Activated naive CD8-positive, alpha-beta T cell treated with anti-CD3 and anti-CD28 coated beads, Interleukin-2, amount 10 ng/mL, durations not matched to agents 7 days and 5 days (primary cell): ENCODE measurements at regions of chr11 and their contacts with region 1.

Region 1: GRCh38 chr11:117143871-117144476 is at the start of gene PAFAH1B2:
- DNase-seq: peak; percentile 95
- ATAC-seq: peak; percentile 89
- H3K4me3 Mint-ChIP-seq: peak within 1 kb of the TSS; percentile 98
- H3K27ac Mint-ChIP-seq: peak within 1 kb of the TSS; percentile 95
- H3K4me1 Mint-ChIP-seq: peaks cover 35% of the 10 kb centered on the region
- H3K27me3 Mint-ChIP-seq: peaks cover 18% of the 10 kb centered on the region
- total RNA-seq, gene PAFAH1B2: 58.5 to 60.4 TPM

Region 2: GRCh38 chr11:116772443-116773202 is 371.4 kb before region 1 on chr11 and contains the start of gene BUD13:
- POLR2A ChIA-PET with region 1: interaction called, 11 read pairs
- DNase-seq: peak; percentile 98
- ATAC-seq: peak; percentile 92
- H3K4me3 Mint-ChIP-seq: peak within 1 kb of the TSS; percentile 96
- H3K27ac Mint-ChIP-seq: peak within 1 kb of the TSS; percentile 95
- H3K4me1 Mint-ChIP-seq: peaks cover 34% of the 10 kb centered on the region
- H3K27me3 Mint-ChIP-seq: no peaks in the 10 kb centered on the region
- total RNA-seq, gene BUD13: 32.1 to 33.0 TPM

Region 3: DNA sequence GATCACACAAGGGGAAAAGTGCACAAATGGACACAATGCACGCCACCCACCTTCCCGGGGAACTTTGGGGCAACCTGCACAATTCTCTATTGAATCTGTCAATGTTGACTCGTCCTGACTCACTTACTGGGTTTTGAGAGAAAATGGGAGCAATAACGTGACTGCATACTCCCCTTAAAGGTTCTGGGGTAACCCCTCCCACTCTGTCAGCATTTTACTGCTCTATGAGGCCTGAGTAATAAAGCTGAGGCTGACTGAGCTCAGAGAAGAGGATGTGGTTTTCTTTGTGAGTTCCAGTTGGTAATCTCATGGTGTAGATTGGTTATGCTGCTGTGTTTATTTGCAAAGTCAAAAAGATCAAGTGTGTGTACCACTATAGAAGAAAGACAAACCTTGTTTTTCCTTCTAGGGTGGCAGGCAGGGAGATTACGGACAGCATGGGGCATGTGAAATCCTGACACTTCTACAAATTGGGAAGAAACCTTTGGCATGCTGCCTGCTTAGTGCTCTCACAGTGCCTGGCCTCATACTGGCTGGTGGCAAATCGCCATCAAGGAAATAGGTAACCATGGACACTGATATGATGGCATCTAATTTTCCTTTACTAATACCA is 290.4 kb before region 1 on chr11:
- POLR2A ChIA-PET with region 1: interaction called, 12 read pairs
- DNase-seq: peak; percentile 50
- ATAC-seq: peak; percentile 96
- H3K4me3 Mint-ChIP-seq: peak overlapping the region; percentile 84
- H3K27ac Mint-ChIP-seq: peak overlapping the region; percentile 98
- H3K4me1 Mint-ChIP-seq: peaks cover 56% of the 10 kb centered on the region
- H3K27me3 Mint-ChIP-seq: no peaks in the 10 kb centered on the region

Region 4: DNA sequence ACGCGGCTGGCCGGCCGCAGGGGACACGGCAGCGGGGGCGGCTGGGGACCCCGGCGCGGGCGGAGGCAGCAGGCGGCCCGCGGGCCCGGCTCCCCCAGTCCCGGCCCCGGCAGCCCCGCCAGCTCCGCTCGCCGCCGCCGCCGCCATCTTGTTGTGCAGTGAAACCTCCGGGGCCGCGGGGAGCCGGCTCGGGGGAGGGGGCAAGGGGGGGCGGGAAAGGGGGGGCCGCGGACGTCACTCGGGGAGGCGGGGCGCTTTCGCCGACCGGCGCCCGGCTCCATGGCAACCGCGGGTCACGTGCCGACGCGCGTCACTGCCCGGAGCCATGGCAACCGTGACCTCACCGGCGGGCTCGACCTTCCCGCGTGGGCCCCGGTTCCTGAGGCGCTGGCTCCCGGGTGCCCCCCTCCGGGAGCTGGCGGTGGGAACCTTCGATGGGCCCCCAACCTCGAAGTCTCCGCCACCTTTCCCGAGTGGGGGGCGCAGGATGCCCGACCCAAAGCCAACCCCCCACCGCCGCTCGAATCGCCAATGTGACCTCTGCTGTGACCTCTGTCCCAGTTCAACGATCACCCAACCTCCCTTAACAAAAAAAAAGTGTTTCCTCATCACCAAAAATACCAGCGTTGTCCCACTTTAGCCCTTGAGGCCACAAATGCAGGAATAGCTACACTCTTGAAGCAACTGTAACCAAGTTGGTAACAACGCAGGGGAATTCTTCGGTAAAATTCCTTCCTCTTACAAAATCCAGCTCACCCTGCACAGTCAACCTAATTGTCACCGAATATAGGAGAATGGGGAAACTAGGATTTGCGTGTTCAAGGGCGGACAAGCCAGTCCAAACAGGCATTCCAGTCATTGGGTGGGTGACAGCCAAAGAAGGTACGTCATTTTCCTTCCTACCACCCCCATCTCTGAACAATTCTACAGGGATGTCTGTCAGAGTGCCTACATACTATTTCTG is 45.4 kb before region 1 on chr11 and contains the start of gene SIK3:
- POLR2A ChIA-PET with region 1: interaction called, 15 read pairs
- DNase-seq: peak; percentile 95
- ATAC-seq: peak; percentile 71
- H3K4me3 Mint-ChIP-seq: peak within 1 kb of the TSS; percentile 93
- H3K27ac Mint-ChIP-seq: peak within 1 kb of the TSS; percentile 93
- H3K4me1 Mint-ChIP-seq: peaks cover 38% of the 10 kb centered on the region
- H3K27me3 Mint-ChIP-seq: no peaks in the 10 kb centered on the region
- total RNA-seq, gene SIK3: 44.7 to 45.8 TPM

Region 5: DNA sequence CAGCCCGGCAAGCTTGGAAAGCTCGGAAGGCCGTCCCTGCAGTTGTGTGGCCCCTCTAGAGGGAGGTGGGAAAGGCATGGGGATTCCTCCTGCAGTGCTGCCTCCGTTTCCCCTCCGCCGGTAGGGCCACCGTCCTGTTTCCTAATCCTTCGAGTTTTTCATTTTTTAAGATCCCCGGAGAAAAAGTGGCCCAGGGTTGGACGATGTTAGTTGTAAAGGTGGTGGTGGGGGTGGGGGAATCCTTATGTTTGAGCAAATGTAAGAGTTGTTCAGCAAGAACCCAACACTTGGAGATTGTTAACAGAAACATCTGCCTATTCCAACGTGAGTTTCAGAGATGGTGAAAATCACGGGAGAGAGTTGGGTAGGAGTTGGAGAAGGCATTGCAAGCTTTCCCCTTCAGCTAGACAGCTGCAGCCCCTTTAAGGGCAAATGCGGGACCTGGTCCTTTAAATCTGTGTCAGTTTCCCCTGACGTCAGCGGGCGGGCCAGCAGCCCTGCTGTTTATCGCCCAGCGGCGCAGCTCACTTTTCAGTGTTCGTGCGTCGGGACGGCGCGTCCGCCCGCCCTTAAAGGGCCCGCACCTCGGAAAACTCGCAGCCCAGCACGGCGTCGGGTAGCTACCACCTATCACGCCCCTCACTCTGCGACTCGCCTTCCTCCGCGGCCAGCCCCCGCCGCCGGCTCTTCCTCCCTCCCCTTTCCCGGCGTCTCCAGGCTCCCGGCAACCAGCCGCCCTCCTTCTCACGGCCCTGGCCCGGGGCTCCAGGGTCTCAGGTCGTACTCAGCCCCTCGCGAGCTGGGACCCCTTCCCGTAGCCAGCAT is 34.4 kb after region 1 on chr11 and contains the start of gene SIDT2:
- POLR2A ChIA-PET with region 1: interaction called, 30 read pairs
- DNase-seq: peak; percentile 87
- ATAC-seq: peak; percentile 97
- H3K4me3 Mint-ChIP-seq: peak within 1 kb of the TSS; percentile 93
- H3K27ac Mint-ChIP-seq: peak within 1 kb of the TSS; percentile 90
- H3K4me1 Mint-ChIP-seq: peaks cover 23% of the 10 kb centered on the region
- H3K27me3 Mint-ChIP-seq: no peaks in the 10 kb centered on the region
- total RNA-seq, gene SIDT2: 34.9 to 35.0 TPM

Region 6: GRCh38 chr11:117232092-117232878 is 88.3 kb after region 1 on chr11 and contains the start of gene RNF214:
- POLR2A ChIA-PET with region 1: interaction called, 15 read pairs
- DNase-seq: peak; percentile 87
- ATAC-seq: peak; percentile 73
- H3K4me3 Mint-ChIP-seq: peak within 1 kb of the TSS; percentile 100
- H3K27ac Mint-ChIP-seq: peak within 1 kb of the TSS; percentile 100
- H3K4me1 Mint-ChIP-seq: peaks cover 36% of the 10 kb centered on the region
- H3K27me3 Mint-ChIP-seq: no peaks in the 10 kb centered on the region
- total RNA-seq, gene RNF214: 22.6 to 26.0 TPM